Panc1 (cell line): ENCODE measurements at regions of chr5 and their contacts with region 1.

Region 1: GRCh38 chr5:14842117-14842516 is 29.5 kb downstream of the ANKH start:
- DNase-seq: no peak
- ATAC-seq: no peak
- H3K4me3 ChIP-seq: no peak overlapping the region
- H3K27ac ChIP-seq: no peak overlapping the region
- H3K4me1 ChIP-seq: no peaks in the 10 kb centered on the region
- H3K27me3 ChIP-seq: peaks cover 3% of the 10 kb centered on the region
- CTCF ChIP-seq: no peak

Region 2: DNA sequence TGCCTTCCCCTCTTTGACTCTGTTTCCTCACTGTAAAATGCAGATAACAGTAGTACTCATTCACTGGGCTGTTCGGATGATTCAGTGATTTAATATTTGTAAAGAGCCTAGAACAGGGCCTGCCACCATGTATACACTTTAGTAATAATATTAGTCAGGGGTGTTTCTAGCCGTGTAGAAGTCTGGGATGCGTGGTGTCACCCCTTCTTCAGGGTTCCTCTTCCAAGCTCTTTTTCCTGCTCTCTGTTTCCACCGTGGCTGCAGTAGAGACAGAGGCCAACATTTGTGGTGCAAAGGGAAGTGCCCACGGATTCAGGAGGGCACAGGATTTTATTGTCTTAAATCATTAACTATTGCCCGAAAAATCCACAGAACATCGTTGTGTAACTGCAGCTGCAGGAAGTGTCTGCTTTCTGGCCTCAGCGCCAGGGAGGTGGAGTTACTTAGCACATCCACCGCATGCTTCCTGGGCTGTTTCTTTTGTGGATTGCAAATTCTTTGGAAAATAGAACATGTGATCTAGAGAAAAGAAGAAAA is 637.3 kb before region 1 on chr5:
- CTCF ChIA-PET with region 1: no interaction called
- POLR2A ChIA-PET with region 1: interaction called, 11 read pairs
- in situ Hi-C with region 1: no loop called
- intact Hi-C with region 1: no loop called
- DNase-seq: no peak
- ATAC-seq: peak; percentile 9
- H3K4me3 ChIP-seq: peak overlapping the region; percentile 7 to 40; a peak in 3 of 4 replicates
- H3K27ac ChIP-seq: peak overlapping the region; percentile 99
- H3K4me1 ChIP-seq: peaks cover 95% of the 10 kb centered on the region
- H3K27me3 ChIP-seq: no peaks in the 10 kb centered on the region
- CTCF ChIP-seq: no peak

Region 3: GRCh38 chr5:15013654-15014463 is 171.7 kb after region 1 on chr5:
- CTCF ChIA-PET with region 1: no interaction called
- POLR2A ChIA-PET with region 1: no interaction called
- in situ Hi-C with region 1: no loop called
- intact Hi-C with region 1: no loop called
- DNase-seq: peak; percentile 75
- ATAC-seq: peak; percentile 94
- H3K4me3 ChIP-seq: no peak overlapping the region
- H3K27ac ChIP-seq: 0 out of 2 replicates have a peak overlapping the region, but pooled peaks have one; percentile 9
- H3K4me1 ChIP-seq: peaks cover 6% of the 10 kb centered on the region
- H3K27me3 ChIP-seq: no peaks in the 10 kb centered on the region
- CTCF ChIP-seq: peak; percentile 66; the same call in 1 of the 2 replicates